SK-N-SH (cell line): ENCODE measurements at regions of chr14 and their contacts with region 1.

Region 1: GRCh38 chr14:58501214-58501816 is 73.8 kb downstream of the KIAA0586 start:
- DNase-seq: peak; percentile 37
- H3K4me3 ChIP-seq: no peak overlapping the region
- H3K27ac ChIP-seq: no peak overlapping the region
- H3K4me1 ChIP-seq: no peaks in the 10 kb centered on the region
- H3K27me3 ChIP-seq: no peaks in the 10 kb centered on the region
- CTCF ChIP-seq: peak; percentile 95
- EP300 ChIP-seq: no peak
- RAD21 ChIP-seq: peak; percentile 97

Region 2: DNA sequence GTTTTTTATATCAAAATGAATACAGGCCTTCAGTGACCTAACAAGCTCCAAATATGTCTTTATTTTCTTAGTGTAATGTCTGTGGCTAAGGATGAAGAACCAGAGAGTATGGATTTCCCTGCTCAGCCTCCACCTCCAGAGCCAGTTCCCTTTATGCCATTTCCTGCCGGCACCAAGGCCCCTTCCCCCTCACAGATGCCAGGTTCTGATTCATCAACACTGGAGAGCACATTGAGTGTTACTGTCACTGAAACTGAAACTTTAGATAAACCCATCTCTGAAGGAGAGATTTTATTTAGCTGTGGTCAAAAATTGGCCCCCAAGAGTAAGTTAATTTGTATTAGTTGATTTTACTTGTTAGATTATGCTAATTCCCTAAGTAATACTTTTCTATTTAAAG is 12.8 kb before region 1 on chr14:
- CTCF ChIA-PET with region 1: interaction called, 23 read pairs
- POLR2A ChIA-PET with region 1: no interaction called
- DNase-seq: no peak
- H3K4me3 ChIP-seq: 0 out of 4 replicates have a peak overlapping the region, but pooled peaks of 1 of the 2 experiments have one; percentile 2
- H3K27ac ChIP-seq: peak overlapping the region in 1 of 2 experiments; percentile 52; a peak in 3 of 4 replicates
- H3K4me1 ChIP-seq: 0 out of 4 replicates have a peak, but pooled peaks cover 0 to 11% of the 10 kb centered on the region in 2 experiments
- H3K27me3 ChIP-seq: no peaks in the 10 kb centered on the region
- CTCF ChIP-seq: no peak
- EP300 ChIP-seq: no peak
- RAD21 ChIP-seq: no peak

Region 3: GRCh38 chr14:58637391-58638230 is 136.3 kb after region 1 on chr14 and contains the start of gene DACT1:
- CTCF ChIA-PET with region 1: interaction called, 93 read pairs
- POLR2A ChIA-PET with region 1: no interaction called
- DNase-seq: peak; percentile 82
- H3K4me3 ChIP-seq: peak within 1 kb of the TSS; percentile 74 to 77
- H3K27ac ChIP-seq: peak within 1 kb of the TSS; percentile 43 to 73
- H3K4me1 ChIP-seq: peaks cover 14 to 16% of the 10 kb centered on the region in 2 experiments; a peak in 3 of 4 replicates
- H3K27me3 ChIP-seq: no peaks in the 10 kb centered on the region
- CTCF ChIP-seq: no peak; the same call in 1 of the 2 replicates
- EP300 ChIP-seq: no peak
- RAD21 ChIP-seq: no peak
- polyA plus RNA-seq, gene DACT1: 3.3 and 4.2 TPM in 2 replicates

Region 4: GRCh38 chr14:59028476-59029202 is 527.3 kb after region 1 on chr14:
- CTCF ChIA-PET with region 1: interaction called, 23 read pairs
- POLR2A ChIA-PET with region 1: no interaction called
- DNase-seq: peak; percentile 69
- H3K4me3 ChIP-seq: peak overlapping the region in 1 of 2 experiments; percentile 8; a peak in 1 of 4 replicates
- H3K27ac ChIP-seq: peak overlapping the region; percentile 58 to 93; a peak in 3 of 4 replicates
- H3K4me1 ChIP-seq: peaks cover 0 to 5% of the 10 kb centered on the region in 2 experiments; a peak in 2 of 4 replicates
- H3K27me3 ChIP-seq: no peaks in the 10 kb centered on the region
- CTCF ChIP-seq: peak; percentile 95
- EP300 ChIP-seq: peak in 1 of 2 experiments; percentile 93; a peak in 2 of 4 replicates
- RAD21 ChIP-seq: peak; percentile 94

Region 5: GRCh38 chr14:59116984-59117415 is 615.7 kb after region 1 on chr14:
- CTCF ChIA-PET with region 1: interaction called, 12 read pairs
- POLR2A ChIA-PET with region 1: no interaction called
- DNase-seq: no peak
- H3K4me3 ChIP-seq: no peak overlapping the region
- H3K27ac ChIP-seq: peak overlapping the region in 1 of 2 experiments; percentile 48; a peak in 1 of 4 replicates
- H3K4me1 ChIP-seq: peaks cover 0 to 3% of the 10 kb centered on the region in 2 experiments; a peak in 1 of 4 replicates
- H3K27me3 ChIP-seq: no peaks in the 10 kb centered on the region
- CTCF ChIP-seq: no peak
- EP300 ChIP-seq: no peak
- RAD21 ChIP-seq: no peak